MCF 10A (cell line): ENCODE measurements at regions of chr12 and their contacts with region 1.

Region 1: DNA sequence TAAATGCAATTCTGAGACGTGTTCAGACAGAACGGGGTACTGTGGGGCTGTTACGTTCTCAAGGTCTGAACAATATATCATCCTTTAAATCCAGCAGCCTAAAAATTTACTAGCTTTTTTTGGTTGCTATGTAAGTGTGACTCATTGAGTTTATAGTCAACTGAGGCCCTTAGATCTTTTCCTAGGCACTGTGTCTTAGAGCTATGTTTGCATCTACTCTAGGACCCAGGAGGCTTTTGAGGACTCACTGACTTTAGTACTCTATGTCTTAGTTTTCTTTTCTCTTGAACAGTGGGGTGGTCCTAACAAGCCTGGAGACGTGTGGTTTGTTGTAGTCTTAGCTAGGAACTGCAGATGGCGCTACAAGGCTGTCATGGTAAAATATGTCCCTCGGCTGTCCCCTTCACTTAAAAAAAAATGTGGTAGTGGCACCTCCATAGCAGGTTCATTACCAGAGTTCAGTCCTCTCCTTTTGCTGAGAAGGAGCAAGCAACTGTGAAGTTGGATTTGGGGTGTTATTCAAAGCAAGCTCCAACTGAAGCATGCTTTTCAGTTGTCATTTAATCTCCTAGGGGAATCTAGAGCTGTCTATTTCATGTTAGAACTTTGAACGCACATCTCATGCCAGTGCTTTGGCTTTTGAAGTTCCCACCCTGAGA is 8.7 kb upstream of the SPATS2 start:
- DNase-seq: peak; percentile 72
- H3K4me3 Mint-ChIP-seq: no peak overlapping the region
- H3K27ac Mint-ChIP-seq: peak overlapping the region; percentile 57
- H3K4me1 Mint-ChIP-seq: peaks cover 25% of the 10 kb centered on the region
- H3K27me3 Mint-ChIP-seq: no peaks in the 10 kb centered on the region
- CTCF ChIP-seq: peak; percentile 93

Region 2: GRCh38 chr12:48296586-48297282 is 1061.9 kb before region 1 on chr12:
- CTCF ChIA-PET with region 1: no interaction called
- POLR2A ChIA-PET with region 1: no interaction called
- intact Hi-C with region 1: no loop called
- DNase-seq: no peak
- H3K4me3 Mint-ChIP-seq: no peak overlapping the region
- H3K27ac Mint-ChIP-seq: no peak overlapping the region
- H3K4me1 Mint-ChIP-seq: no peaks in the 10 kb centered on the region
- H3K27me3 Mint-ChIP-seq: peaks cover 27% of the 10 kb centered on the region
- CTCF ChIP-seq: no peak

Region 3: DNA sequence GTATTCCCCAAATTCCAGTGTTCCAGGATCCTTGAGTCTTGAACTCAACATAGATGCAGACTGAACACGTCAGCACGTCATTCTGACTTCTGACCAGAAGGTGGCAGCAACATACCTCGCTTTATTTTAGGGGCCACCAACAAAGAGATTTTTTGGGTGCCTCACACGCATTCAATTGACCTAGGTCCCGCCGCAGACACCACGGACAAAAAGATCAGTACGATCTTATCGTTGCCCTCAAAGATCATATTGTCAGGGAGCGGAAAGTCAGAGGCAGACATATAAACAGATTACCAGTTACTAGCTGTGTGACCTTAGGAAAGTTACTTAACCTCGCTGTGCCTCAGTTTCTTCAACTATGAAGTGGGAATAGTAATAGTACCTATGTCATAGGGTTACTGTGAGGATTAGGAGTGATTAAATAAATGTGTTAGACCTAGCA is 70.2 kb before region 1 on chr12:
- CTCF ChIA-PET with region 1: interaction called, 251 read pairs
- POLR2A ChIA-PET with region 1: interaction called, 4 read pairs
- intact Hi-C with region 1: loop called (anchors 1 kb)
- DNase-seq: peak; percentile 70
- H3K4me3 Mint-ChIP-seq: no peak overlapping the region
- H3K27ac Mint-ChIP-seq: no peak overlapping the region
- H3K4me1 Mint-ChIP-seq: peaks cover 4% of the 10 kb centered on the region
- H3K27me3 Mint-ChIP-seq: no peaks in the 10 kb centered on the region
- CTCF ChIP-seq: peak; percentile 77

Region 4: DNA sequence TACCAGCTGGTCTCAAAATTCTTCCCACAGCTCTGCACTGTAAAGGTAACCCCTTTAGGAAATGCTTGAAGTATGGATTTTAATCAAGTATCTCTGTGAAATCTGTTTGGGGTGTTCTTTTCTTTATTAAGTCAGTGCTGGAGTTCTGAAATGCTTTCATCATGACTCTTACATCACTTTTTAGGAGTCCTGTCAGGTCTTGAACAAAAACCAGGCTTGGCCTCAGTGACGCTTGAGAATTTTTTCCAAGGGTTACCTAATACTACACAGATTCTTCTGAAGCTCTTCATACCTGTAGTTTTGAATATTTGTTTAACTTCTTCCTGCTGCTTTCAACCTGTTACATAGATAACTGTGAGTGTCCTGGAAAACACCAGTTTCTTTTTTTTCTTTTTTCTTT is 133.2 kb after region 1 on chr12:
- CTCF ChIA-PET with region 1: interaction called, 12 read pairs
- POLR2A ChIA-PET with region 1: no interaction called
- intact Hi-C with region 1: no loop called
- DNase-seq: peak; percentile 55
- H3K4me3 Mint-ChIP-seq: no peak overlapping the region
- H3K27ac Mint-ChIP-seq: peak overlapping the region; percentile 64
- H3K4me1 Mint-ChIP-seq: peaks cover 19% of the 10 kb centered on the region
- H3K27me3 Mint-ChIP-seq: no peaks in the 10 kb centered on the region
- CTCF ChIP-seq: no peak

Region 5: GRCh38 chr12:49527361-49528130 is 168.9 kb after region 1 on chr12:
- CTCF ChIA-PET with region 1: interaction called, 24 read pairs
- POLR2A ChIA-PET with region 1: interaction called, 3 read pairs
- intact Hi-C with region 1: no loop called
- DNase-seq: no peak
- H3K4me3 Mint-ChIP-seq: no peak overlapping the region
- H3K27ac Mint-ChIP-seq: no peak overlapping the region
- H3K4me1 Mint-ChIP-seq: no peaks in the 10 kb centered on the region
- H3K27me3 Mint-ChIP-seq: no peaks in the 10 kb centered on the region
- CTCF ChIP-seq: no peak

Region 6: GRCh38 chr12:49567611-49568441 is 209.2 kb after region 1 on chr12 and contains the start of gene MCRS1:
- CTCF ChIA-PET with region 1: interaction called, 20 read pairs
- POLR2A ChIA-PET with region 1: interaction called, 3 read pairs
- intact Hi-C with region 1: loop called (anchors 5 kb)
- DNase-seq: peak; percentile 92
- H3K4me3 Mint-ChIP-seq: peak within 1 kb of the TSS; percentile 90
- H3K27ac Mint-ChIP-seq: peak within 1 kb of the TSS; percentile 98
- H3K4me1 Mint-ChIP-seq: peaks cover 14% of the 10 kb centered on the region
- H3K27me3 Mint-ChIP-seq: no peaks in the 10 kb centered on the region
- CTCF ChIP-seq: no peak
- total RNA-seq, gene MCRS1: 34.3 and 58.7 TPM in 2 replicates